HEK293 (cell line): ENCODE measurements at regions of chr3 and their contacts with region 1.

Region 1: GRCh38 chr3:129176051-129176450 is 7.6 kb downstream of the CNBP start:
- H3K4me3 ChIP-seq: no peak overlapping the region
- H3K27ac ChIP-seq: no peak overlapping the region
- H3K4me1 ChIP-seq: peaks cover 7% of the 10 kb centered on the region
- CTCF ChIP-seq: no peak

Region 2: GRCh38 chr3:129106331-129106730 is 69.7 kb before region 1 on chr3:
- CTCF ChIA-PET with region 1: no interaction called
- POLR2A ChIA-PET with region 1: no interaction called
- H3K4me3 ChIP-seq: no peak overlapping the region
- H3K27ac ChIP-seq: no peak overlapping the region
- H3K4me1 ChIP-seq: no peaks in the 10 kb centered on the region
- CTCF ChIP-seq: no peak; the same call in 1 of the 2 replicates

Region 3: GRCh38 chr3:129160891-129161859 is 14.9 kb before region 1 on chr3 and contains the start of gene ISY1:
- CTCF ChIA-PET with region 1: interaction called, 11 read pairs
- POLR2A ChIA-PET with region 1: interaction called, 3 read pairs
- H3K4me3 ChIP-seq: peak within 1 kb of the TSS; percentile 78
- H3K27ac ChIP-seq: peak within 1 kb of the TSS; percentile 84
- H3K4me1 ChIP-seq: no peaks in the 10 kb centered on the region
- CTCF ChIP-seq: peak; percentile 64

Region 4: DNA sequence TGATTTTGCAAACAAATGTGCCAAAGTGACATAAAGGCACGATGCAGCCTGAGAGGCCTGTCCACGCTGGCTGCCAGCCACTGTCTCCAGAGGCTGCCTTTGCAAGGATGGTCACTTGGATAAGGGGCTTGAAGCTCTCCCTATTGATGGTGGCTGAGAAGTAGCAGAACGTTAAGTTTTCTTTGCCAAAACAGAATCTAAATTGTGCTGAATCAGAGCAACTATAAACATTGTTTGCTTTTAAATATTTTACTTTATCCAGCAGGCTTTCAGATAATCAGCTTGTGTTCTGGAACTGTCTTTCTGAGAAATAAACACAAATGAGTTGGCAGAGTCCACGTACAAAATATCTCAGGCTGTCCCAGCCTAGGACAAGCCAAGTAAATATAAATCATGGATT is 31.4 kb after region 1 on chr3:
- CTCF ChIA-PET with region 1: no interaction called
- POLR2A ChIA-PET with region 1: no interaction called
- H3K4me3 ChIP-seq: no peak overlapping the region
- H3K27ac ChIP-seq: no peak overlapping the region
- H3K4me1 ChIP-seq: peaks cover 5% of the 10 kb centered on the region; the same call in 1 of the 2 replicates
- CTCF ChIP-seq: no peak